HCT116 (cell line): ENCODE measurements at regions of chr4 and their contacts with region 1.

Region 1: GRCh38 chr4:31674313-31674947 is 954.3 kb downstream of the PCDH7 start:
- DNase-seq: peak; percentile 23
- ATAC-seq: peak; percentile 87
- H3K4me3 ChIP-seq: no peak overlapping the region
- H3K27ac ChIP-seq: no peak overlapping the region
- H3K4me1 ChIP-seq: no peaks in the 10 kb centered on the region
- H3K27me3 ChIP-seq: no peaks in the 10 kb centered on the region
- CTCF ChIP-seq: peak in 2 of 3 experiments; percentile 60 to 64; a peak in 4 of 6 replicates
- POLR2A ChIP-seq: no peak
- RAD21 ChIP-seq: peak; percentile 62

Region 2: GRCh38 chr4:31045724-31046318 is 628.6 kb before region 1 on chr4:
- CTCF ChIA-PET with region 1: no interaction called
- POLR2A ChIA-PET with region 1: no interaction called
- RAD21 ChIA-PET with region 1: no interaction called
- intact Hi-C with region 1: loop called (anchors 10 kb)
- DNase-seq: no peak
- ATAC-seq: peak; percentile 64
- H3K4me3 ChIP-seq: no peak overlapping the region
- H3K27ac ChIP-seq: peak overlapping the region; percentile 86
- H3K4me1 ChIP-seq: peaks cover 91 to 97% of the 10 kb centered on the region in 2 experiments
- H3K27me3 ChIP-seq: no peaks in the 10 kb centered on the region
- CTCF ChIP-seq: peak; percentile 29 to 77 (median 67); a peak in 5 of 6 replicates
- POLR2A ChIP-seq: no peak
- RAD21 ChIP-seq: peak; percentile 74

Region 3: DNA sequence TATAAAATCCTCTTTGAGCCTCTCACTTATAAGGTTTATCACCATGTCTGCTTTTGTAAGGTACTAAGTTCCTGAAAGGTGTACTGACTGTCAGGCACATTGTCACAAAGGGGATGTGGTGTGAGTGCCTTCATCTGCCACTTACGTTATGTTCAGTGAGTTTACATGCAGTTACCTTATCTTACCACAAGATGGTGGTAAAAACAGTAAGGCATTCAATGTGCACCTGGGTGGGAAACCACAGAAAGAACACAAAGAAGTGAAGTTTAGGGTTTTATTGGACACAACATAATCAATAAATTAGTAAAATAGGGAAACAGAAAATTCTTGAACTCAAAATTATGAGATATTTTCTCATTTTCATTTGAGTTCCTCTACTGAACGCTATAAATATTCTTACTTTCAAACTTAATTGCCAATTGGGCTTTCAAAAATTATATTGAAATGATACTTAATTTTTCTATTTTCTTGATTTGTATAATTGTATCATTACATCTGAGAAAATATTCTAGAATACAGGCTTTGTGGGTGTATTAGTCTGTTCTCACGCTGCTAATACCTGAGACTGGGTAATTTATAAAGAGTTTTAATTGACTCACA is 303.5 kb before region 1 on chr4:
- CTCF ChIA-PET with region 1: interaction called, 3 read pairs
- POLR2A ChIA-PET with region 1: no interaction called
- RAD21 ChIA-PET with region 1: no interaction called
- intact Hi-C with region 1: loop called (anchors 2 kb)
- DNase-seq: peak; percentile 66
- ATAC-seq: peak; percentile 84
- H3K4me3 ChIP-seq: no peak overlapping the region
- H3K27ac ChIP-seq: no peak overlapping the region
- H3K4me1 ChIP-seq: peaks cover 0 to 8% of the 10 kb centered on the region in 2 experiments; a peak in 1 of 4 replicates
- H3K27me3 ChIP-seq: no peaks in the 10 kb centered on the region
- CTCF ChIP-seq: peak; percentile 67 to 83 (median 79); a peak in 5 of 6 replicates
- POLR2A ChIP-seq: no peak
- RAD21 ChIP-seq: peak; percentile 79